Dorsolateral prefrontal cortex (tissue), 120 donors: ENCODE measurements at regions of chr2 and their contacts with region 1.

Region 1: GRCh38 chr2:203327901-203328759 is at the start of gene ABI2:
- DNase-seq: peak; percentile 70 to 93 (median 84)
- H3K4me3 ChIP-seq: peak within 1 kb of the TSS; percentile 60 to 99 (median 93)
- H3K27ac ChIP-seq: peak within 1 kb of the TSS; percentile 54 to 98 (median 94)
- H3K27me3 ChIP-seq: no peaks in the 10 kb centered on the region
- CTCF ChIP-seq: peak in 13 of 56 donors; percentile 5 to 36 (median 14)
- total RNA-seq, gene ABI2: 128 to 305 (median 224) TPM

Region 2: DNA sequence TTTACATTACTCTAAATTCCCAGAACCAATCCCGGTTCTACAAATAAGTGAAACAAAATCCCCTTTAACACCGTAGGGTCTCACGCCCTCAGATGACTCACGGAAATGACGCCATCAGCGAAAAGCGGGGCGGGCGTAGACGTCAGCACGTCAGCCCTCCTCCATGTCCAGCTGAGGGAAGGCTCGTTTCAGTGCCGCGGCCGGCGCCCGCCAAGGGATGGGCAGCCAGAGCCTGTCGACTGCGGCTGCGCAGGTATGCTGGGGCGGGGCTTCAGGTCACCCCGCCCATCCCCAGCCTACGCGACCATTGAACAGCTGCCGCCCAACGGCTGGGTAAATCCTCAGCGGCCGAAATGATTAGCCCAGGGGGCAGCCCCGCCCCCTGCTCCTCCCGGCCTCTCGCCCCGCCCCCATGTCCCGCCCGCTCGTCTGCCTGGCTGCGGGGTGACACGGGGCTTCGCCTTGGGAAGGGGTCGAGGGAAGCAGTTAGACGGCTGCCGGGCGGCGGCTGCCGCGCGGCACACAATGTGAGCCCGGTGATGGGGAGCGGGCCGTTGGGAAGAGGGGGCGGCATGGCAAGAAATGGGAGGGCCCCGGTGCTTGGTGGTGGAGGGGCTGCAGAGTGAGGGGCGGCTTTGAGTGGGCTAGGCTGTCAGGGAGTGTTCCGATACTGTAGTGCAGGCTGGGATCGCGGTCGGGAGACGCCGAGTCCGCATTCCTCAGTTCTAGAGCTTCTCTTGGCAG is 313.5 kb before region 1 on chr2 and contains the start of gene NBEAL1:
- intact Hi-C with region 1: loop called (anchors 10 kb)
- DNase-seq: peak; percentile 97 to 99 (median 98)
- H3K4me3 ChIP-seq: peak within 1 kb of the TSS; percentile 39 to 99 (median 84)
- H3K27ac ChIP-seq: peak within 1 kb of the TSS; percentile 59 to 97 (median 92)
- H3K27me3 ChIP-seq: no peaks in the 10 kb centered on the region
- CTCF ChIP-seq: peak in 25 of 56 donors; percentile 4 to 57 (median 23)
- total RNA-seq, gene NBEAL1: 14.1 to 45.8 (median 27.0) TPM

Region 3: GRCh38 chr2:203412546-203413331 is 84.6 kb after region 1 on chr2:
- intact Hi-C with region 1: loop called in 1 of 2 experiments (anchors 10 kb)
- DNase-seq: no peak
- H3K4me3 ChIP-seq: no peak overlapping the region
- H3K27ac ChIP-seq: peak overlapping the region in 4 of 59 donors; percentile 3 to 28 (median 8)
- H3K27me3 ChIP-seq: no peaks in the 10 kb centered on the region
- CTCF ChIP-seq: no peak

Region 4: GRCh38 chr2:203437511-203437910 is 109.4 kb after region 1 on chr2:
- intact Hi-C with region 1: loop called in 1 of 2 experiments (anchors 5 kb)
- DNase-seq: no peak
- H3K4me3 ChIP-seq: peak overlapping the region in 2 of 59 donors; percentile 8 to 34
- H3K27ac ChIP-seq: peak overlapping the region in 40 of 59 donors; percentile 0 to 95 (median 67)
- H3K27me3 ChIP-seq: no peaks in the 10 kb centered on the region
- CTCF ChIP-seq: no peak